PC-9 (cell line): ENCODE measurements at regions of chr6 and their contacts with region 1.

Region 1: DNA sequence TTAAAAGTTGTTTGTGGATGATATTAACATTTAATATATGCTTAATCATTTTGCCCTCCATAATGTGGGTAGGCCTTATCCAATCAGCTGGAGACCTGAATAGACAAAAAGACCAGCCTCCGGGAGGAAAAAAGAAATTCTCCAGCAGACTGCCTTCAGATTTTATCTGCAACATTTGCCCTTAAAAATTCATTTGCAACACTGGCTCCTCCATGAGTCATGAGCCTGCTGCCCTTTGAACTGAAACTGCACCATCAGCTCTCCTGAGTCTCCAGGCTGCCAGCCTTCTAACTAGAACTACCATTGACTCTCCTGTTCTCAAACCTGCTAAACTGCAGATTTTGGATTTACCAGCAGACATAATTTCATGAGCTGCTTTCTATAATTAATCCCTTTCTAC is 223.8 kb upstream of the THEMIS start:
- DNase-seq: peak in 1 of 2 experiments; percentile 3
- H3K4me3 ChIP-seq: no peak overlapping the region
- H3K27ac ChIP-seq: no peak overlapping the region
- H3K4me1 ChIP-seq: peaks cover 11% of the 10 kb centered on the region
- H3K27me3 ChIP-seq: no peaks in the 10 kb centered on the region
- CTCF ChIP-seq: no peak

Region 2: DNA sequence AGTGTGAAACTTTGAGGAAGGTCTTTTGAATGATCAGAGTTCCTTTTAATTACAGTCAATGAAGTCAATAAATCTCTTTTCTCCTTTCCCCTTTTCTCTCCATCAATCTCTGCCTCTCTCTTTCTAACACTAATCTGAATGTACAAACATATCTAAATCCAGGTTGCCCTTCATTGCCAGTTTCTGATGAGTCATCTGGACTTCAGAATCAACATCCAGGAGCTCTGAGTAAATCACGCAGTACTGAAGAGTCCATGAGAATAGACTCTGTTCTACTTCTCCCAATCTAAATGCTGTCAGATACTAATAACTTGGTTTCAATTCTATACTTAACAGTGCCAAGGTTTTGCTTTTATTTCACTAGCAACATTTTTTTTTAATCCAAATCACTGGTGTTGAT is 14.8 kb after region 1 on chr6:
- CTCF ChIA-PET with region 1: interaction called, 12 read pairs
- POLR2A ChIA-PET with region 1: no interaction called
- intact Hi-C with region 1: no loop called
- DNase-seq: no peak
- H3K4me3 ChIP-seq: no peak overlapping the region
- H3K27ac ChIP-seq: no peak overlapping the region
- H3K4me1 ChIP-seq: peaks cover 10% of the 10 kb centered on the region
- H3K27me3 ChIP-seq: no peaks in the 10 kb centered on the region
- CTCF ChIP-seq: no peak